ENCODE measurements at regions of chr12 and their contacts with region 1.

Region 1: DNA sequence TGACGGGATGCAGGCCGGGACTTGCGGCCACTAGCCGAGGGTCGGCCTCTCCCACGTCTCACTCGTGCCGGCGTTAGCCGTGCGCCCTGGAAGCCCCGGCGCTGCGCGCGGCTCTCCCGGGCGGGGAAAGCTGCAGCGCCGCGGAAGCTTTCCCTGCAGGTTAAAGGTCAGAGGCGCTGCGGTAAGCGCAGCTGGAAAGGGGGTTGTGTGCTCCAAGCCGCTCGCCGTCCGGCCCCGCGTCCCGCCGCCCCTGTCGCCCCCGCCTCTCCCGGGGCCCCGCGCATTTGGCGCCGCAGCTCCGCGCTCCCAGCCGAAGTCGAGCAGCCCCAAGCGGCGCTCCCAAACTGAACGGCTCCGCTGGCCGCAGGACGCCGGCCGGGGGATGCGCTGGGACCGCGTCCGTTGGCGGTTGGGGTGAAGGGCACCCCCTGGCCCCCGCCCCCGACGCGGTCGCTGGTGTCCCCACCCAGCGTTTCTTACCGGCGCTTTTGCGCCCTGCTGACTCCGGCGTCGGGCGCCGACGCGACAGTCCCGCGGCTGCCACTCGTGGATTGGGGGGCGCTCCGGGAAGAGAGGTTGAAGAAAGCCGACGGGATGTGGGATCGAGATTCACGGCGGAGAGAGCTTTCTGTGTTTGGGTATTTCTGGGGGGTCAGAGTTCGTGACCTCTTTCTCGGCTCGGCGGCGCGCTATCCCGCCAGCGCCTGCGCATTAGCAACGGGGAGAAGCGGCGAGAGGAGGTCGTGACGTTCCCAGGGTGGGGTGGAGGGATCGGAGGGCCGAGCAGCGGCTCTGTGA is at the start of gene NR2C1:
- DNase-seq: peak; percentile 80 to 87
- H3K4me3 ChIP-seq: peak within 1 kb of the TSS; percentile 80
- H3K27ac ChIP-seq: peak within 1 kb of the TSS; percentile 68
- H3K4me1 ChIP-seq: peaks cover 6% of the 10 kb centered on the region
- H3K27me3 ChIP-seq: no peaks in the 10 kb centered on the region
- CTCF ChIP-seq: no peak
- total RNA-seq, gene NR2C1: 24.2 and 26.4 TPM in 2 replicates

Region 2: GRCh38 chr12:95085612-95086011 is 12.5 kb after region 1 on chr12:
- CTCF ChIA-PET with region 1: no interaction called
- POLR2A ChIA-PET with region 1: interaction called, 12 read pairs
- intact Hi-C with region 1: no loop called
- DNase-seq: no peak
- H3K4me3 ChIP-seq: no peak overlapping the region
- H3K27ac ChIP-seq: no peak overlapping the region
- H3K4me1 ChIP-seq: 0 out of 2 replicates have a peak, but pooled peaks cover 6% of the 10 kb centered on the region
- H3K27me3 ChIP-seq: no peaks in the 10 kb centered on the region
- CTCF ChIP-seq: no peak

Region 3: GRCh38 chr12:95102916-95103671 is 30.0 kb after region 1 on chr12:
- CTCF ChIA-PET with region 1: interaction called, 3 read pairs
- POLR2A ChIA-PET with region 1: no interaction called
- intact Hi-C with region 1: loop called (anchors 2 kb)
- DNase-seq: peak; percentile 51 to 98
- H3K4me3 ChIP-seq: peak overlapping the region; percentile 33; the same call in 1 of the 2 replicates
- H3K27ac ChIP-seq: peak overlapping the region; percentile 88
- H3K4me1 ChIP-seq: peaks cover 64% of the 10 kb centered on the region
- H3K27me3 ChIP-seq: no peaks in the 10 kb centered on the region
- CTCF ChIP-seq: no peak

Region 4: GRCh38 chr12:95473884-95474659 is 401.0 kb after region 1 on chr12 and contains the start of gene METAP2:
- CTCF ChIA-PET with region 1: no interaction called
- POLR2A ChIA-PET with region 1: interaction called, 3 read pairs
- intact Hi-C with region 1: loop called (anchors 10 kb)
- DNase-seq: peak; percentile 91 to 96
- H3K4me3 ChIP-seq: peak within 1 kb of the TSS; percentile 94
- H3K27ac ChIP-seq: peak within 1 kb of the TSS; percentile 78
- H3K4me1 ChIP-seq: peaks cover 20% of the 10 kb centered on the region
- H3K27me3 ChIP-seq: no peaks in the 10 kb centered on the region
- CTCF ChIP-seq: no peak
- total RNA-seq, gene METAP2: 74.4 and 93.8 TPM in 2 replicates

Region 5: GRCh38 chr12:95494888-95495287 is 421.8 kb after region 1 on chr12:
- CTCF ChIA-PET with region 1: interaction called, 27 read pairs
- POLR2A ChIA-PET with region 1: no interaction called
- intact Hi-C with region 1: no loop called
- DNase-seq: no peak
- H3K4me3 ChIP-seq: no peak overlapping the region
- H3K27ac ChIP-seq: no peak overlapping the region
- H3K4me1 ChIP-seq: no peaks in the 10 kb centered on the region
- H3K27me3 ChIP-seq: no peaks in the 10 kb centered on the region
- CTCF ChIP-seq: no peak

Region 6: GRCh38 chr12:95532851-95533250 is 459.8 kb after region 1 on chr12:
- CTCF ChIA-PET with region 1: interaction called, 3 read pairs
- POLR2A ChIA-PET with region 1: no interaction called
- intact Hi-C with region 1: loop called (anchors 10 kb)
- DNase-seq: no peak
- H3K4me3 ChIP-seq: no peak overlapping the region
- H3K27ac ChIP-seq: no peak overlapping the region
- H3K4me1 ChIP-seq: no peaks in the 10 kb centered on the region
- H3K27me3 ChIP-seq: no peaks in the 10 kb centered on the region
- CTCF ChIP-seq: no peak

Region 7: GRCh38 chr12:95820102-95820703 is 747.1 kb after region 1 on chr12:
- CTCF ChIA-PET with region 1: no interaction called
- POLR2A ChIA-PET with region 1: interaction called, 21 read pairs
- intact Hi-C with region 1: no loop called
- DNase-seq: peak in 1 of 2 experiments; percentile 46
- H3K4me3 ChIP-seq: no peak overlapping the region
- H3K27ac ChIP-seq: no peak overlapping the region
- H3K4me1 ChIP-seq: peaks cover 4% of the 10 kb centered on the region
- H3K27me3 ChIP-seq: no peaks in the 10 kb centered on the region
- CTCF ChIP-seq: peak; percentile 69

Region 8: DNA sequence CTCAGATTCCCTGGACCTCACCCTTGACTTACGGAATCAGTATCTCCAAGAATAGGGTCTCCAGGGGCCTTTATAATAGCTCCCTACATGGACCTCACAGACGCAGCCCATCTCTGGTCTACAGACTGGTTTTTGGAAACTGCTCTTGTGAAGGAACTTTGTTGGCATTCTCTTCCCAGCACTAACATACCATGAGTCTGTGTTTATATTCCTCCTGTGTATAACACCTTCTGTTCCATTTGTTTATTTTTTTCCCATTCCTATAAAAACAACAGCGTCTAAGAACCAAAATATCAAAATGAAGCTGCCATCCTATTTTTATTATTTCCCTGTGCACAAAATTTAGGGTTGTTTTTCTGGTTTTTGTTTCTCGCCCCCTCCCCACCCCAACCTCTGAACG is 1965.0 kb after region 1 on chr12:
- CTCF ChIA-PET with region 1: no interaction called
- POLR2A ChIA-PET with region 1: no interaction called
- intact Hi-C with region 1: no loop called
- DNase-seq: no peak
- H3K4me3 ChIP-seq: no peak overlapping the region
- H3K27ac ChIP-seq: no peak overlapping the region
- H3K4me1 ChIP-seq: no peaks in the 10 kb centered on the region
- H3K27me3 ChIP-seq: peaks cover 14% of the 10 kb centered on the region; the same call in 1 of the 2 replicates
- CTCF ChIP-seq: no peak

Measured in PC-9 (cell line).